ENCODE measurements at regions of chr3 and their contacts with region 1.

Region 1: GRCh38 chr3:146195605-146196004 is 34.6 kb upstream of the PLOD2 start:
- DNase-seq: no peak
- H3K4me3 ChIP-seq: no peak overlapping the region
- H3K27ac ChIP-seq: peak overlapping the region; percentile 81
- H3K4me1 ChIP-seq: peaks cover 45% of the 10 kb centered on the region
- H3K27me3 ChIP-seq: no peaks in the 10 kb centered on the region
- CTCF ChIP-seq: no peak
- POLR2A ChIP-seq: no peak

Region 2: DNA sequence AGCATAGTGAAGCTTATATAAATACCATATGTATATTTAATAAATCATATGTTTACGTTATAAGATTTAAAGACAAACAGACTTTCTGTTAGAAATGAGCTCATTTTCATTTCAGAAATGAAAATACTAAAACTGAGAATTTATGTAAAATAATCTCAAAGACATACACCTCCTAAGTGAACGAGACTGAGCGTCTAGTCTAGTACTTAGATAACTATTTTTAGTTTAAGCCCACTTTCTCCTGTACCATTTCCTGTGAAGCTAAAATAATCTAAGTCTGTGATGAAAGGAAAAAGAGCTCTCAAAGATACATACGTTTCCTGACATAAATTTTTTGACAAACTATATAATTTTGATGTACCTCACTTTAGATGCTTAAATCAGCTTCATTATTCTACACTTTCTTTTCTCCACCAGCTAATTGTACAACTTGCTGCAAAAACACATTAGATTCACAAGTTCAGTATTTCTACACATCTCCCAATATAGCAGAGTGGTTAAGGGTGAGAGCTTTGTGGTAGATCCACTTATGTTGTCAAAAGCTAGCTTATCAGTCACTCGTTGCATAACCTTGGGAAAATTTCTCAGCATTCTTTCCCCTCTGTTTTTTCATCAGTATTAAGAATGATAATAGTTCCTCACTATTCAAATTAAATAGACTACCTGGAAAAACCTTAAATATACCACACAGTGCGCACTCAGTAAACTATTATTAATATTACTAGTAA is 737.6 kb before region 1 on chr3:
- CTCF ChIA-PET with region 1: no interaction called
- POLR2A ChIA-PET with region 1: no interaction called
- dilution Hi-C with region 1: no loop called
- intact Hi-C with region 1: no loop called
- DNase-seq: no peak
- H3K4me3 ChIP-seq: no peak overlapping the region
- H3K27ac ChIP-seq: no peak overlapping the region
- H3K4me1 ChIP-seq: no peaks in the 10 kb centered on the region
- H3K27me3 ChIP-seq: no peaks in the 10 kb centered on the region
- CTCF ChIP-seq: no peak
- POLR2A ChIP-seq: no peak

Region 3: GRCh38 chr3:146177519-146177918 is 18.1 kb before region 1 on chr3:
- CTCF ChIA-PET with region 1: interaction called, 4 read pairs
- POLR2A ChIA-PET with region 1: no interaction called
- dilution Hi-C with region 1: no loop called
- intact Hi-C with region 1: loop called (anchors 1 kb)
- DNase-seq: no peak
- H3K4me3 ChIP-seq: peak overlapping the region in 1 of 3 experiments; percentile 26
- H3K27ac ChIP-seq: peak overlapping the region; percentile 99
- H3K4me1 ChIP-seq: peaks cover 37% of the 10 kb centered on the region
- H3K27me3 ChIP-seq: no peaks in the 10 kb centered on the region
- CTCF ChIP-seq: no peak
- POLR2A ChIP-seq: no peak

Region 4: GRCh38 chr3:146250449-146251382 is 55.1 kb after region 1 on chr3 and contains the start of gene PLSCR4:
- CTCF ChIA-PET with region 1: interaction called, 3 read pairs
- POLR2A ChIA-PET with region 1: no interaction called
- dilution Hi-C with region 1: no loop called
- intact Hi-C with region 1: loop called (anchors 2 kb)
- DNase-seq: peak; percentile 93
- H3K4me3 ChIP-seq: peak within 1 kb of the TSS; percentile 94 to 97 (median 96)
- H3K27ac ChIP-seq: peak within 1 kb of the TSS; percentile 77
- H3K4me1 ChIP-seq: peaks cover 36% of the 10 kb centered on the region
- H3K27me3 ChIP-seq: no peaks in the 10 kb centered on the region
- CTCF ChIP-seq: no peak
- POLR2A ChIP-seq: peak; percentile 35
- total RNA-seq, gene PLSCR4: 81.5 and 91.8 TPM in 2 replicates

Region 5: DNA sequence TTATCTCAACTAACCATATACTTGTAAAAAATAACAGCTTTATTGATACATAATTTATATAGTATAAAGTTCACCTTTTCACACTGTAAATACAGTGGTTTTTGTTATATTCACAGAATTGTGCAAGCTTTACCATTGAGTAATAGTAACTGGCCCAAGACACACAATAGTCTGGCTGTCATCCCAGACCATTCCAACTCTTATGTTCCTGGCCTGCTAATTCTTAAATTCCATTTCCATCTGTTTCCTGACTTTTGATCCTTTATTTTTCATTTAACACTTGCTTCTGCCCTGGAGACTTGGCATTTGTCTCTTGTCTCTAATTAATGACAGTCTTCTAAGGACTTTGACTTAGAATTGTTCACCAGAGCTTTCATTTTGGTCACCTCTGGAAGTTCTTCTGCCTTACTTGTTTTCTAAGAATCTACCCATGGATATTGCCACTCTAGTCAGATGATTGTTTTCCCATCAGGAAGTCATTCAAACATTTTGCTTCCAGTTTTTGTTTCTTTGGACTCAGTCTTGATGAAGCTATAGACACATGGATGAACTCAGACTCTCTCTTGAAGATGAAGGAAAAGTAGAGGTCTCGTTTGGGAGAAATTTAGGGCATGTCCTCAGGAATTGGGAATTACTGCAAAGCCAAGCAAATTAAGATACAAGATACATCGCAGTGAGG is 82.5 kb after region 1 on chr3:
- CTCF ChIA-PET with region 1: interaction called, 4 read pairs
- POLR2A ChIA-PET with region 1: no interaction called
- dilution Hi-C with region 1: no loop called
- intact Hi-C with region 1: loop called (anchors 1 kb)
- DNase-seq: peak; percentile 97
- H3K4me3 ChIP-seq: no peak overlapping the region
- H3K27ac ChIP-seq: peak overlapping the region; percentile 89
- H3K4me1 ChIP-seq: peaks cover 57% of the 10 kb centered on the region
- H3K27me3 ChIP-seq: no peaks in the 10 kb centered on the region
- CTCF ChIP-seq: no peak
- POLR2A ChIP-seq: peak; percentile 66

Region 6: GRCh38 chr3:146503461-146504202 is 308.0 kb after region 1 on chr3:
- CTCF ChIA-PET with region 1: no interaction called
- POLR2A ChIA-PET with region 1: no interaction called
- dilution Hi-C with region 1: no loop called
- intact Hi-C with region 1: loop called (anchors 2 kb)
- DNase-seq: peak; percentile 45
- H3K4me3 ChIP-seq: no peak overlapping the region
- H3K27ac ChIP-seq: no peak overlapping the region
- H3K4me1 ChIP-seq: peaks cover 35% of the 10 kb centered on the region
- H3K27me3 ChIP-seq: no peaks in the 10 kb centered on the region
- CTCF ChIP-seq: no peak
- POLR2A ChIP-seq: no peak

Region 7: GRCh38 chr3:146646261-146646660 is 450.7 kb after region 1 on chr3:
- CTCF ChIA-PET with region 1: no interaction called
- POLR2A ChIA-PET with region 1: no interaction called
- dilution Hi-C with region 1: no loop called
- intact Hi-C with region 1: no loop called
- DNase-seq: no peak
- H3K4me3 ChIP-seq: no peak overlapping the region
- H3K27ac ChIP-seq: no peak overlapping the region
- H3K4me1 ChIP-seq: no peaks in the 10 kb centered on the region
- H3K27me3 ChIP-seq: no peaks in the 10 kb centered on the region
- CTCF ChIP-seq: no peak
- POLR2A ChIP-seq: no peak